ENCODE measurements at regions of chr21 and their contacts with region 1.

Region 1: DNA sequence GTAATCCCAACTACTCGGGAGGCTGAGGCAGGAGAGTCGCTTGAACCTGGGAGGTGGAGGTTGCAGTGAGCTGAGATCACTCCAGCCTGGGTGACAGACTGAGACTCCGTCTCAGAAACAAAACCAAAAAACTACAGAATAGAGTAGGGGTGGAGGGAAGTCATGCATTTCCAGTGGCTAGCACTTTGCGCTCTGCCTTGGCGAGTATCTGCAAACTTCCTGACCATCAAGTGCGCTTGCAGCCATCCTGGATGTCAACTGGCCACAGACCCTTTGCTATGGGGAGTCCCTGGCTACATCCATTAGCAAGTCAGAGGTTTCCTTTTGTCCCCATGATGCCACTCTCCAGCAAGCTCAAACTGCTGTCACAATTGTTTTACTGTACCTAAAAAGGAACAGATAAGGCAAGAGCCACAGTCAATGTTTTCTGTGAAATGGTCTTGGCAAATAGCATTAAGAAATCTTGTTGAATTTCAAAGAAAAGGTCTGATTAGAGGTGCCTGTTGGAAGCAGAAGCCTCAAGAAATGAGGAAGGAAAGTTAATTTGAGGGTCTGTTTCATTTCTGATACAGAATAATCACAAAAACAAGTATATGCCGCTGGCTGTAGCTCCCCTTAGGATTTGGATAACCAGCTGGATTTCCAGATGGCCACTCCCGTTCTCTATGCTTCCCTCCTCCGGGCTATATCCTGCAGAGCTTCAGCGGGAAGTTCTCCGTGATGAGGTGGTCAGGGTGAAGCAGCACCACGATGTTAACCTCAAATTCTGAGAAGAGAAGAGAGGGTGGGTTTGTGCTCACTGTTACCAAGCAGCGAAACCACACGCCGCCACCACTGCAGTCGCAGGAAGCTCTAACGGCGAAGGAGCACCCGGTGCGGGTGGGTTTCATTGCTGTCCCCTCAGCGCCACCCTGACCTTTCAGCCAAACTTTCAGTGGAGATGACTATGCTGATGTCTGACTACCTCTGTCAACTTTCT is 42.0 kb downstream of the VPS26C start:
- DNase-seq: no peak
- ATAC-seq: no peak
- H3K4me3 ChIP-seq: no peak overlapping the region
- H3K27ac ChIP-seq: no peak overlapping the region
- H3K4me1 ChIP-seq: peaks cover 6% of the 10 kb centered on the region; the same call in 1 of the 2 replicates
- H3K27me3 ChIP-seq: no peaks in the 10 kb centered on the region
- CTCF ChIP-seq: no peak

Region 2: GRCh38 chr21:37244501-37245083 is 19.4 kb after region 1 on chr21:
- CTCF ChIA-PET with region 1: no interaction called
- POLR2A ChIA-PET with region 1: no interaction called
- intact Hi-C with region 1: loop called (anchors 1 kb)
- DNase-seq: no peak
- ATAC-seq: no peak
- H3K4me3 ChIP-seq: no peak overlapping the region
- H3K27ac ChIP-seq: no peak overlapping the region
- H3K4me1 ChIP-seq: no peaks in the 10 kb centered on the region
- H3K27me3 ChIP-seq: no peaks in the 10 kb centered on the region
- CTCF ChIP-seq: no peak